Activated T-helper 1 cell treated with anti-CD3 and anti-CD28 coated beads, Interleukin-12 subunit alpha, Interleukin-12 subunit beta, Interleukin-2, Interleukin-4 antibody, amounts not matched to agents 30 ng/mL and 10 ng/mL and 1 ng/mL, durations not matched to agents 14 hours and 24 hours and 36 hours (primary cell): ENCODE measurements at regions of chr11 and their contacts with region 1.

Region 1: GRCh38 chr11:76444384-76445123 is at the start of gene EMSY:
- DNase-seq: peak; percentile 91
- H3K4me3 Mint-ChIP-seq: peak within 1 kb of the TSS; percentile 98
- H3K27ac Mint-ChIP-seq: peak within 1 kb of the TSS; percentile 96
- H3K4me1 Mint-ChIP-seq: peaks cover 36% of the 10 kb centered on the region
- H3K27me3 Mint-ChIP-seq: no peaks in the 10 kb centered on the region
- total RNA-seq, gene EMSY: 30.4 and 34.8 TPM in 2 replicates

Region 2: DNA sequence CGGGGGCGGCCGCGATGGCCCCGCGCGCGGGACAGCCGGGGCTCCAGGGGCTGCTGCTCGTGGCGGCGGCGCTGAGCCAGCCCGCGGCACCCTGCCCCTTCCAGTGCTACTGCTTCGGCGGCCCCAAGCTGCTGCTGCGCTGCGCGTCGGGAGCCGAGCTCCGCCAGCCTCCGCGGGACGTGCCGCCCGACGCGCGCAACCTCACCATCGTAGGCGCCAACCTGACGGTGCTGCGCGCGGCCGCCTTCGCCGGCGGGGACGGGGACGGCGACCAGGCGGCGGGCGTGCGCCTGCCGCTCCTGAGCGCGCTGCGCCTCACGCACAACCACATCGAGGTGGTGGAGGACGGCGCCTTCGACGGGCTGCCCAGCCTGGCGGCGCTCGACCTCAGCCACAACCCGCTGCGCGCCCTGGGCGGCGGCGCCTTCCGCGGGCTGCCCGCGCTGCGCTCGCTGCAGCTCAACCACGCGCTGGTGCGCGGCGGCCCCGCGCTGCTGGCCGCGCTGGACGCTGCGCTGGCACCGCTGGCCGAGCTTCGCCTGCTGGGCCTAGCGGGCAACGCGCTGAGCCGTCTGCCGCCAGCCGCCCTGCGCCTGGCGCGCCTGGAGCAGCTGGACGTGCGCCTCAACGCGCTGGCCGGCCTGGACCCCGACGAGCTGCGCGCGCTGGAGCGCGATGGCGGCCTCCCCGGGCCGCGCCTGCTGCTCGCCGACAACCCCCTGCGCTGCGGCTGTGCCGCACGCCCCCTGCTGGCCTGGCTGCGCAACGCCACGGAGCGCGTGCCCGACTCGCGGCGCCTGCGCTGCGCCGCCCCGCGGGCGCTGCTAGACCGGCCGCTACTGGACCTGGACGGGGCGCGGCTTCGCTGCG is 1203.3 kb before region 1 on chr11:
- intact Hi-C with region 1: loop called (anchors 5 kb)
- DNase-seq: peak; percentile 89
- H3K4me3 Mint-ChIP-seq: peak overlapping the region; percentile 58
- H3K27ac Mint-ChIP-seq: no peak overlapping the region
- H3K4me1 Mint-ChIP-seq: peaks cover 6% of the 10 kb centered on the region
- H3K27me3 Mint-ChIP-seq: peaks cover 52% of the 10 kb centered on the region

Region 3: DNA sequence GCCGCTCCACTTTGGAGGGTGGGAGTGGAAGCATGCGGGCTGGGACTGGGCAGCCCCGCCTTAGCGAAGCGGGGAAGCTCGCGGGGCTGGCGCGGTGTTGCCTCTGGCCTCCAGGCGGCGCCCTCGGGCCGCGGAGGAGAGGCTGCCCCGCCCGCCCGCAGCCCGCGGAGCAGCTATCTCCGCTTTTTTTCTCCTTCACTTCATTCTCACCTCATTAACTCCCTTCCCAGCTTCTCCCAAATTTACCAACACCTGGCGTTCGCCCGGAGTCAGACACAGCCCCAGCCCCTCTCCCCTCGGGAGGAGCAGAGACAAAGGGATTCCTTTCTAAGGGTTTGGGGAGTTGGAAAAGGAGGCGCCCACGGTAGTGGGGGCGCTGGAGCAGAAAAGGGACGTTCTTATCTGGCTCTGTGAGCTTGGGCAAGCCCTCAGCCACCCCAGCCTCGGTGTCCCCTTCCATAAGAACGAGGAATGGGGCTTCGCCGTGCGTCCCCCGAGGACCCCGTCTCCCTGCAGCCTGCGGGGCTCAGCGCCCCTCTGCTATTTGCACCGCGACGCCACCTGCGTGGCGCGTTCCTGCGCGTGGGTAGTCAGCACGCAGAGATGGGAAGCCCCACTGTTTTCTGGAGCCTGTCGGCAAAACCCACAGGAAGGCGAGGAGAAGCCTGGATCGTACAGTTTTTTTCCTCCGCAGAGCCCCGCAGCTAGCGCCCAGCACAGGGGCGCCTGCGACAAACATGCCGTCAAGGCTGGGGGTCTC is 236.7 kb before region 1 on chr11:
- intact Hi-C with region 1: loop called (anchors 2 kb)
- DNase-seq: peak; percentile 70
- H3K4me3 Mint-ChIP-seq: peak overlapping the region; percentile 73
- H3K27ac Mint-ChIP-seq: no peak overlapping the region
- H3K4me1 Mint-ChIP-seq: peaks cover 12% of the 10 kb centered on the region
- H3K27me3 Mint-ChIP-seq: peaks cover 56% of the 10 kb centered on the region

Region 4: GRCh38 chr11:76380967-76381719 is 63.4 kb before region 1 on chr11 and contains the starts of genes GVQW3 and THAP12:
- intact Hi-C with region 1: loop called (anchors 1 kb)
- DNase-seq: peak; percentile 97
- H3K4me3 Mint-ChIP-seq: peak within 1 kb of the TSS; percentile 94
- H3K27ac Mint-ChIP-seq: peak within 1 kb of the TSS; percentile 95
- H3K4me1 Mint-ChIP-seq: peaks cover 44% of the 10 kb centered on the region
- H3K27me3 Mint-ChIP-seq: no peaks in the 10 kb centered on the region
- total RNA-seq, gene GVQW3: 3.9 and 4.7 TPM in 2 replicates
- total RNA-seq, gene THAP12: 78.3 and 81.2 TPM in 2 replicates

Region 5: GRCh38 chr11:76469141-76469540 is 24.6 kb after region 1 on chr11:
- intact Hi-C with region 1: no loop called
- DNase-seq: no peak
- H3K4me3 Mint-ChIP-seq: no peak overlapping the region
- H3K27ac Mint-ChIP-seq: no peak overlapping the region
- H3K4me1 Mint-ChIP-seq: no peaks in the 10 kb centered on the region
- H3K27me3 Mint-ChIP-seq: no peaks in the 10 kb centered on the region

Region 6: DNA sequence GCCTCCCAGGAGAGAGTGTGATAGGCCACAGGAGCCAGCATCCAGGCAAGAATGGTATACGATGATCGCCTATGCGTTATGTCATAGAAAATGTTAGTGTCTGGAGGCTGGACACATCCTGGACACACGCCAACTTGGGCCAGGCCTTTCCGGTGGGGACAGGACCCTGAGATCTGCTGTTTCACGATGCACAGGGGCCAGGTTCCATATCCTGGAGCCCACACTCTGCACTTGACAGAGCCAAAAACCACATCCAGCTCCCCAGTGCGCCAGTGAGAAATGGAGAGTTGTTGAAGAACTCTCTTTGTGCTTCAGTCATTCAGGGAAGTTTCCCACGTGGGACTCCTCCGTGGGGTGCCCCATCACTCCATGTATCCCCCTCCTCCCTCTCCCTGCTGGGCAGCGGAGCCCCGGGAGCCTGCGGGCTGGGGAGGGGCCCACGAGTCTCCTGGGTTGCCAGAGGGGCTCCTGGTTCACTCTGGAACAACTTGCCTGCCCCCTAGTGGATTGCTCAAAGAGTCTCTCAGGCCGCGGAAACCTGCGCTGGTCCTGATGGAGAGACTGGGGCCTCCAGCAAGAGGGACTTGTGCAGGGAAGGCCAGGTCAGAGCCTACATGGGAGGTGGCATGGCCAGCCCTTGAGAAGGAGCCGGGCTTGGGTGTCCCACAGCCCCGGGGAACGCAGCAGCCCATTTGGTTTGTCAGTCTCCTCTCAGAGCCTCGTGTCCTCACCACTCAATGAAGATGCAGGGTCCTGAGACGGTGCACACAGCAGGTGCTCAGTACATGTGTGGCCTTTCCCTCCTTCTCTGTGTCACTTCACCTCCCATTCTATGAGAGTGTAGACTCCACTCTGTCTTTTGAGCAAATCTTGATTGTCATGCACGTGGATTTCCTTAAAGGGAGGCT is 236.2 kb after region 1 on chr11:
- intact Hi-C with region 1: loop called (anchors 10 kb)
- DNase-seq: peak; percentile 55
- H3K4me3 Mint-ChIP-seq: no peak overlapping the region
- H3K27ac Mint-ChIP-seq: no peak overlapping the region
- H3K4me1 Mint-ChIP-seq: peaks cover 37% of the 10 kb centered on the region
- H3K27me3 Mint-ChIP-seq: peaks cover 22% of the 10 kb centered on the region

Region 7: DNA sequence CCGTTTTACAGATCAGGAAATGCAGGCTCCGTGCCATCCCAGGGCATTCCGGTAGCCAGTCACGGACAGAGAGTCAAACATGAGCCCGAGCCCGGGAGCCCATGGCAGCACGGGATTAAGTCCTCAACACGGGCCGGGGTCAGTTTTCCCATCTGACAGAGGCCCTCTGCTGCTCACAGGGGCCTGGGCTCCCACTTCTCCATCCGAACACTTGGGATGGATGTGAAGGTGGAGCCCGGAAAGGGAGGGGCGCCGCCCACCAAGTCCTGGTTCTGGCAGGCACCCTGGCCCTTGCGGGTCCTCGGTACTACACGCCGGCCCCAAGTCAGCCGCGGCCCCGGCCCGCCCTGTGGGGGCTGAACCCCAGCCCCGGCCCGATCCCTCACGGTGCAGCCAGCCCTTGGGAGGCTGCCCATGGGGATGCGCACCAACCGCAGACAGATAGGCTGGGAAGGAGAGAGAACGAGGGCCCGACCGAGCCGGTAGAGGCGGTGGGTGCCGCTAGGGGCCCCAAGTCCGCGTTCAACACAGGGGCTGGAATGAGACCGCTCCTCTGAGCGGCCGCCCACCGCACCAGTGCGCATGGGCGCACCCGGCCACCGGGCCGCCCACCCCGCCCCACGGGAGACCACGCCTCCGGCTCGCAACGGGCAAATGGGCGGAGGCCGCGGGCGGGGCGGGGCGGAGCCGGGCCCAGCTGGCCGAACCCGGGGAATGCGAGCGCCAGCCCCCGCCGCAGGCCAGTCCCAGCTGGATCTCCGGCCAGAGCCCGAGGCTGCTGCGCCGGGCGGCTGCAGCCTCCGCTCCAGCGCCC is 621.9 kb after region 1 on chr11 and contains the start of gene CAPN5:
- intact Hi-C with region 1: loop called (anchors 10 kb)
- DNase-seq: peak; percentile 80
- H3K4me3 Mint-ChIP-seq: peak within 1 kb of the TSS; percentile 86
- H3K27ac Mint-ChIP-seq: no peak within 1 kb of the TSS
- H3K4me1 Mint-ChIP-seq: no peaks in the 10 kb centered on the region
- H3K27me3 Mint-ChIP-seq: peaks cover 27% of the 10 kb centered on the region
- total RNA-seq, gene CAPN5: 0.10 and 0.32 TPM in 2 replicates